ENCODE measurements at regions of chr20 and their contacts with region 1.

Region 1: DNA sequence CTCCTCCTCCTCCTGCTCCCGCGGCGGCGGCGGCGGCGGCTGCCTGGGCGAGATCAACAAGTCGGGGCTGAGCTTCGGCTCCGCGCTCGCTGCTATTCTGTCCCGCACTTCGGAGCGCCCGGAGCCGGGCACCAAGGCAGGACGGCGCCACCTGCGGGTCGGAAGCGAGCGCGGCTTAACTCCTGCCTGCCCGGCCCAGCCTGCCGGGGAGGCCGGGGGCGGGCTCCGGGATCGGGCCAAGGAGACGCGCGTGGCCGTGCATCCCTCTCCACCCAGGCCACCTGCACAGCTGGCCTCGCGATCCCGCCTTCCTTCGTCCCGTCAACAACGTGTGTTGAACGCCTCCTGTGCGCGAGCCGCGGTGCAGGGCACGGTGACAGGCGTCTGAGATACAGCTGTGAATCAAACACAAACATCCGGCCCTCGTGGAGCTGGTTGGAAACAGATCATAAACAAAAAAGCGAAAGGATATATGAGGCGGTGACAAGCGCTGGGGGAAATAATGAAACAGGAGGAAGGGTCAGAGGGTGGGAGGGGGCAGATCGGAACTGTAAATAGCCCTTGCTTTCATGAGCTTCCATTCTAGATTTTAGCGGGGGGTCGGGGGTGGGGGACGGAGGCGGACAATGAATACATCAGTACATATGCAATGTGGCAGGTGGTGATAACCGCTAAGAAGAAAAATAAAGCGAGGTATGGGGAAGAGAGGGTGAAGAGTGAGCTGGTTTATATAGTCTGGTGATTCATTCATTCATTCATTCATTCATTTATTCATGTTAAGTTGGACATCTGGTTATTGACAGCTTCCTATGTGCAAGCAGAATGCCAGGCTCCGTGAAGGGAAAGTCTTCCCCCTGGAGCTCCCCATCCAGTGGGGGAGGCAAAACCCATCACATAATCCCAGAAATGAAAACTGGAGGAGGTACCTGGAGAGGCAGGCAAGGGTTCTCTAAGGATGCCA is 2.0 kb upstream of the KCNB1 start:
- DNase-seq: peak; percentile 94
- H3K4me3 ChIP-seq: peak overlapping the region; percentile 65 to 72
- H3K27ac ChIP-seq: no peak overlapping the region; a peak in 1 of 4 replicates
- H3K4me1 ChIP-seq: peaks cover 0 to 13% of the 10 kb centered on the region in 2 experiments; a peak in 1 of 4 replicates
- H3K27me3 ChIP-seq: peaks cover 33% of the 10 kb centered on the region; the same call in 1 of the 2 replicates
- CTCF ChIP-seq: peak; percentile 75
- EP300 ChIP-seq: no peak; a peak in 1 of 4 replicates
- RAD21 ChIP-seq: peak; percentile 78

Region 2: DNA sequence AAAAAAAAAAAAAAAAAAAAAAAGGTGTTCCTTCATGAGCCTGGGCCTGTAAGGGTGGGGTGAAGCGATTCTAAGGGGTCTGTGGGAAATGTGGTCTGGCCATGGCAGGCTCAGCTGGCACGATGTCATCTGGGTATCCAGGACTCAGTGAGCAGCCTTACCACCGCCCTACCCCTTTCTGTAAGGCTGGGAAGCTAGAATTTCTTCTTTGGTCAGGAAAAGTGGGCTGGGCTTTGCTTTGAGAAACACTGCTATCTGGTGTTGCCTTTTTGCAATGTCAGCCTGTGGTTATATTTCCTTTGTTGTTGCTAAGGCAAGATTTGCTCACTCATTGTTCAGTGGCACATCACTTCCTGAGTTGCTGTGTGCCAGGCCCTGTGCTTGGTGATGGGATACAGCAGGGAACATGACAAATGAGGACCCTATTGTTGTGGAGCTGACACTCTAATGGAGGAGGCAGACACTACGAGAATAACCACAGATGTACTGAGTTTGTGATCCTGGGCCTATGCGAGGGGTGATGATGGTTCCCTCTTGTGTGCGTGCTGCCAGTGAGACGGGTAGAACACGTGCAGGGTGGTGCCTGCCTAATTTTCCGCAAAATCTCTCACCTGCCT is 160.7 kb before region 1 on chr20:
- CTCF ChIA-PET with region 1: interaction called, 28 read pairs
- POLR2A ChIA-PET with region 1: no interaction called
- DNase-seq: peak; percentile 41
- H3K4me3 ChIP-seq: no peak overlapping the region
- H3K27ac ChIP-seq: no peak overlapping the region; a peak in 1 of 4 replicates
- H3K4me1 ChIP-seq: peaks cover 0 to 8% of the 10 kb centered on the region in 2 experiments; a peak in 1 of 4 replicates
- H3K27me3 ChIP-seq: peaks cover 14% of the 10 kb centered on the region
- CTCF ChIP-seq: peak; percentile 56
- EP300 ChIP-seq: no peak
- RAD21 ChIP-seq: peak; percentile 72

Region 3: GRCh38 chr20:49352751-49353150 is 131.7 kb before region 1 on chr20:
- CTCF ChIA-PET with region 1: interaction called, 49 read pairs
- POLR2A ChIA-PET with region 1: no interaction called
- DNase-seq: no peak
- H3K4me3 ChIP-seq: no peak overlapping the region
- H3K27ac ChIP-seq: no peak overlapping the region
- H3K4me1 ChIP-seq: peaks cover 0 to under 1% of the 10 kb centered on the region in 2 experiments; a peak in 1 of 4 replicates
- H3K27me3 ChIP-seq: no peaks in the 10 kb centered on the region
- CTCF ChIP-seq: no peak
- EP300 ChIP-seq: no peak
- RAD21 ChIP-seq: no peak

Region 4: DNA sequence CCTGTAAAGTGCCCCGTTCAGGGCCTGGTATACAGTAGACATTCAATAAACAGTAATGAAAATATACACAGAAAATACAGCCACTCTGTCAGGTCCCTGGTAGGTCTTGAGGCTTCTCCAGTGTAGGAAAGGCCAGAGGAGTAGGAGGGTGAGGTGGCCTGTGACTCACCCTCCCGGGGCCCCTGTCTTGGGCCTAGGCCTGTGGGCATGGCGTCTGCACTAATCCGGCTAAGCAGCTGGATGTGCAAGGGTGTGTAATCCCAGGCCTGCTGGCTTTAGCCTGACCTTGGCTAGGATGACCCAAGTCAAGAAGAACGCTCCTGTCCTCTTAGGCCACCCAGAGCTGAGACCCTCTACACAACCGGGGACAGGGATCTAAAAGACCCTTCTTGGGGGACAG is 86.9 kb before region 1 on chr20:
- CTCF ChIA-PET with region 1: interaction called, 13 read pairs
- POLR2A ChIA-PET with region 1: no interaction called
- DNase-seq: no peak
- H3K4me3 ChIP-seq: no peak overlapping the region
- H3K27ac ChIP-seq: no peak overlapping the region
- H3K4me1 ChIP-seq: no peaks in the 10 kb centered on the region; a peak in 1 of 4 replicates
- H3K27me3 ChIP-seq: no peaks in the 10 kb centered on the region
- CTCF ChIP-seq: no peak
- EP300 ChIP-seq: no peak
- RAD21 ChIP-seq: no peak

Region 5: GRCh38 chr20:49424536-49424935 is 59.9 kb before region 1 on chr20:
- CTCF ChIA-PET with region 1: interaction called, 13 read pairs
- POLR2A ChIA-PET with region 1: no interaction called
- DNase-seq: peak; percentile 79
- H3K4me3 ChIP-seq: no peak overlapping the region
- H3K27ac ChIP-seq: peak overlapping the region in 1 of 2 experiments; percentile 78; a peak in 2 of 4 replicates
- H3K4me1 ChIP-seq: peaks cover 0 to 23% of the 10 kb centered on the region in 2 experiments; a peak in 2 of 4 replicates
- H3K27me3 ChIP-seq: no peaks in the 10 kb centered on the region
- CTCF ChIP-seq: no peak
- EP300 ChIP-seq: no peak
- RAD21 ChIP-seq: peak; percentile 22; the same call in 1 of the 2 replicates

Region 6: DNA sequence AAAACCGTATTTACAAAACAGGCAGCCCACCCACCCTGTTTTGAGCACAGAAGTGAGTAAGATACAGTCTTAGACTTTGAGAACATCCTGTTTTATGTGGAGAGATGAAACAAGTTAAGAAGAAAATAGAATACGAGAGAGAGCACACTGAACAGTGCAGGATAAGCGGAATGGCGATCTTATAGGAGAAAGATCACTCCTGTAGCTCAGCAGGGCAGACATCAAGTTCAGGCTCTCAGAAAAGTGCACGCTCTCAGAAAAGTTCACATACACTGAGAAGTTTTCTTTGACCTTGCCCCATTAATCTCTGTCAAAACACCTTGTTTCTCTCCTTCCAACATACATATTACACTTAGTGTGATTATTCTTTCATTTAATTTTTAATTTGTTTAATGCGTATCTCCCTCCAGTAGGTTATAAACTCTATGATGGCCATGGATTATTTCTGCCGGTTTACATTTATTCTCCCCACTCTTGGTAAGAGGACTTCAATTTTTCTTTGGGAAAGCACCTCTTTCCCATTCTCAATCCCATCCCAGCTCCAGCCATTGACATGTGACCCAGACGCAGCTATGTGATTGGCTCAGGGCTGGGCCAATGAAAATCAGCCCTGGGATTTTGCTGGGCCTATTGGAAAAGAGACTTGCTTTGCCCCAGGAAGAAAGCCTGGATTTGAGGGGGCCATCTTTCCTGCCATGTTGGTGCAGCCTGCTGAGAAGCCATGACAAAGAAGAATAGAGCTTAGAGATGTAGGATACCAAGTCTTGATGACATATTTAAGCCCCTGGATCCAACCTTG is 18.1 kb before region 1 on chr20:
- CTCF ChIA-PET with region 1: interaction called, 14 read pairs
- POLR2A ChIA-PET with region 1: no interaction called
- DNase-seq: no peak
- H3K4me3 ChIP-seq: no peak overlapping the region
- H3K27ac ChIP-seq: no peak overlapping the region
- H3K4me1 ChIP-seq: no peaks in the 10 kb centered on the region
- H3K27me3 ChIP-seq: no peaks in the 10 kb centered on the region; the same call in 1 of the 2 replicates
- CTCF ChIP-seq: no peak
- EP300 ChIP-seq: no peak
- RAD21 ChIP-seq: no peak

Region 7: GRCh38 chr20:49516916-49517789 is 32.7 kb after region 1 on chr20:
- CTCF ChIA-PET with region 1: interaction called, 13 read pairs
- POLR2A ChIA-PET with region 1: no interaction called
- DNase-seq: no peak
- H3K4me3 ChIP-seq: no peak overlapping the region
- H3K27ac ChIP-seq: no peak overlapping the region
- H3K4me1 ChIP-seq: no peaks in the 10 kb centered on the region
- H3K27me3 ChIP-seq: no peaks in the 10 kb centered on the region
- CTCF ChIP-seq: no peak
- EP300 ChIP-seq: no peak
- RAD21 ChIP-seq: no peak

Region 8: GRCh38 chr20:49676581-49677291 is 192.3 kb after region 1 on chr20:
- CTCF ChIA-PET with region 1: no interaction called
- POLR2A ChIA-PET with region 1: no interaction called
- DNase-seq: no peak
- H3K4me3 ChIP-seq: no peak overlapping the region
- H3K27ac ChIP-seq: peak overlapping the region in 1 of 2 experiments; percentile 58; a peak in 2 of 4 replicates
- H3K4me1 ChIP-seq: peaks cover 27 to 55% of the 10 kb centered on the region in 2 experiments; a peak in 3 of 4 replicates
- H3K27me3 ChIP-seq: no peaks in the 10 kb centered on the region
- CTCF ChIP-seq: no peak
- EP300 ChIP-seq: no peak
- RAD21 ChIP-seq: no peak

Region 9: DNA sequence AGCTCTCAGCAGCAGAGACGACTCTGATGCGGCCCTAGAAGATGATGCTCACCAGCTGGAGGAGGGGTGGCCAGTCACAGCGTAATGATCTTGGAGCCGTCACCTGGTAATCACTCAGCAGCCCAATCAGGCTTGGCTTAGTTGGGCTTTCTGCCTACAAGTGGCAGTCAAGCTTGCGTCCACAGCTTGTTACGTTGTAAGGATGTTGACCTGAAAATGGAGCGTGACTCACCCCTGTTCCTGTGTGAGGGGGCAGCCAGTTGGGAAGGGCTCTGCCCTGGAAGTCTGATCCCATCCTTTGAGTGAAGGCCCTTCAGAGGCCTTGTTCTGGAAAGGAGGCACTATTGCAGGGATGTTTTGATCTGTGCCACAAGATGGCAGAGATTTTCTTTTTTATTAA is 381.1 kb after region 1 on chr20:
- CTCF ChIA-PET with region 1: no interaction called
- POLR2A ChIA-PET with region 1: no interaction called
- DNase-seq: no peak
- H3K4me3 ChIP-seq: no peak overlapping the region
- H3K27ac ChIP-seq: no peak overlapping the region; a peak in 1 of 4 replicates
- H3K4me1 ChIP-seq: 0 out of 4 replicates have a peak, but pooled peaks cover 0 to 8% of the 10 kb centered on the region in 2 experiments
- H3K27me3 ChIP-seq: no peaks in the 10 kb centered on the region
- CTCF ChIP-seq: no peak
- EP300 ChIP-seq: no peak
- RAD21 ChIP-seq: no peak

Measured in SK-N-SH (cell line).